Endothelial cell of umbilical vein (primary cell): ENCODE measurements at regions of chr1 and their contacts with region 1.

Region 1: GRCh38 chr1:184222652-184223052 is 164.2 kb upstream of the C1orf21 start:
- DNase-seq: peak; percentile 57
- H3K4me3 ChIP-seq: no peak overlapping the region
- H3K27ac ChIP-seq: no peak overlapping the region
- H3K4me1 ChIP-seq: no peaks in the 10 kb centered on the region
- H3K27me3 ChIP-seq: peaks cover 6 to 8% of the 10 kb centered on the region in 2 experiments
- CTCF ChIP-seq: peak; percentile 87 to 90
- POLR2A ChIP-seq: no peak

Region 2: GRCh38 chr1:183655562-183656075 is 567.0 kb before region 1 on chr1:
- CTCF ChIA-PET with region 1: interaction called, 11 read pairs
- POLR2A ChIA-PET with region 1: no interaction called
- dilution Hi-C with region 1: no loop called
- intact Hi-C with region 1: loop called (anchors 2 kb)
- DNase-seq: peak; percentile 81
- H3K4me3 ChIP-seq: no peak overlapping the region
- H3K27ac ChIP-seq: no peak overlapping the region
- H3K4me1 ChIP-seq: peaks cover 27% of the 10 kb centered on the region
- H3K27me3 ChIP-seq: no peaks in the 10 kb centered on the region
- CTCF ChIP-seq: peak; percentile 73 to 81
- POLR2A ChIP-seq: no peak

Region 3: DNA sequence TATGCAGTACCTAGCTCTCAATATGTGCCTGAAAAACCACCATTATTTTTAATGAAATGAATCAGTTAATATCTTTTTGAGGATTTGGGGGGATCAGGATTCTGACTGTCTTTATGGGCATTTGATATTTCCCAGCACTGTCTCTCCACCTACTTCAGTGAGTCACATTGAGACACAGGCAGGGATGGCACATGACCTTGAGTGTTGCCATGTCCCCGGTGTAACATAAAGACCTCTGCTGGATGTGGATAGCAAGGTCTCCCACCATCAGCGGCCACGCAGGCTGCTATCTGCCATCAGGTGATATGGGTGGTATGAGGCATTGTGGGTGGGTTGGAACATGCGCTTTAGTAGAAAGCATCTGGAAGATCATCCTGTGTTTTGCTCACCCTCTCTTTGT is 314.6 kb before region 1 on chr1:
- CTCF ChIA-PET with region 1: no interaction called
- POLR2A ChIA-PET with region 1: no interaction called
- dilution Hi-C with region 1: no loop called
- intact Hi-C with region 1: no loop called
- DNase-seq: no peak
- H3K4me3 ChIP-seq: no peak overlapping the region
- H3K27ac ChIP-seq: no peak overlapping the region
- H3K4me1 ChIP-seq: no peaks in the 10 kb centered on the region
- H3K27me3 ChIP-seq: no peaks in the 10 kb centered on the region
- CTCF ChIP-seq: no peak
- POLR2A ChIP-seq: no peak

Region 4: DNA sequence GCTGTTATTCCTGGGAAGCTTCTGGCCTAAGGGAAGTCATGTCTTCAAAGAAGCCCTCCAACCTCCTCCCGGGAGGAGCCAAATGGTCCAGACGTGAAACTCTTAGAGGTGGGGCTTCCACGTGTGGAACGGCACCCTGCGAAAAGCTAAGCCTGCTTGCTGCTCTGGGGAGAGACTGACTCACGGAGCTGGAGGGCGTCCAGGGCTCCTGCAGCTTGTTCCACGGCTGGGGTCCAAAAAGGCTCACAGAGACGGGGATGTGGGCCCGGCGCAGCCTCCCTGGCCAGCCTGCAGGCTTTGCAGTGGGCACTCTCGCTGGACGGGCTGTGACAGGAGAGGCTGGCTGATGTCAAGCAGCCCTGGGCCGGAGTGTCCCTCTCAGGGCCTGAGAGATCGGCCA is 290.2 kb before region 1 on chr1:
- CTCF ChIA-PET with region 1: no interaction called
- POLR2A ChIA-PET with region 1: no interaction called
- dilution Hi-C with region 1: no loop called
- intact Hi-C with region 1: loop called (anchors 5 kb)
- DNase-seq: peak; percentile 12
- H3K4me3 ChIP-seq: no peak overlapping the region
- H3K27ac ChIP-seq: no peak overlapping the region
- H3K4me1 ChIP-seq: no peaks in the 10 kb centered on the region
- H3K27me3 ChIP-seq: no peaks in the 10 kb centered on the region
- CTCF ChIP-seq: no peak
- POLR2A ChIP-seq: no peak

Region 5: DNA sequence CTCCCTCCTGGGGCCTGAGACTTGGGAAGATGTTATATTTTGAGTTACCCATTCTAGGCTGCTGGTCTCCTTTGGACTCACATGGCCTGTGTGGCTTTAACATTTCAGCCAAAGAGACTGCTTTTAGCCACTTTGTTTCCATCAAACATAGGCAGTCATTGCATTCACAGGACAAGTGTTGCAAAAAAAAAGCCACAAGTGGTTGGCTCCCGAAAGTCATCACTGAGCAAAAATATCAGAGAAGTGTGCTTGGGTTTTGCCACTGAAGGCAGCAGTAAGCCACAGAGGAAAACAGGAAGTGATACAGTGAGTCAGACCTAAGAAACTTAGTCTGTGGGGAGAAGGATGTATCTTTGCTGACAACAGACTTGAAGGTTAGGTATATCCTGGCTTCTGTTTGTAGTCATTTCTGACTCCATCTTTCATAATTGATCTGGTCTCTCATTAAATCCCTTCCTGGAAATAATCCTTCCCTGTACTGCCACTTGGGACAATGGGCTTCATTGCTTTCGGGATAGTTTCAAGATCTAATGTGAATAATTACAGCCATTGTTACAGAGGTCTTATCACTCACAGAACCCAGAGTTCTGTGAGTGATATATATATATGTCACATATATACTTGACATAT is 266.0 kb before region 1 on chr1:
- CTCF ChIA-PET with region 1: no interaction called
- POLR2A ChIA-PET with region 1: no interaction called
- dilution Hi-C with region 1: no loop called
- intact Hi-C with region 1: loop called (anchors 2 kb)
- DNase-seq: peak; percentile 79
- H3K4me3 ChIP-seq: no peak overlapping the region
- H3K27ac ChIP-seq: no peak overlapping the region
- H3K4me1 ChIP-seq: peaks cover 9% of the 10 kb centered on the region
- H3K27me3 ChIP-seq: peaks cover 5% of the 10 kb centered on the region in 2 experiments
- CTCF ChIP-seq: peak in 1 of 2 donors; percentile 13
- POLR2A ChIP-seq: no peak

Region 6: GRCh38 chr1:184152434-184152898 is 70.2 kb before region 1 on chr1:
- CTCF ChIA-PET with region 1: interaction called, 8 read pairs
- POLR2A ChIA-PET with region 1: no interaction called
- dilution Hi-C with region 1: no loop called
- intact Hi-C with region 1: loop called (anchors 1 kb)
- DNase-seq: peak; percentile 93
- H3K4me3 ChIP-seq: peak overlapping the region; percentile 40 to 81 (median 74)
- H3K27ac ChIP-seq: peak overlapping the region; percentile 79
- H3K4me1 ChIP-seq: peaks cover 29% of the 10 kb centered on the region
- H3K27me3 ChIP-seq: peaks cover 0 to 3% of the 10 kb centered on the region in 2 experiments
- CTCF ChIP-seq: no peak
- POLR2A ChIP-seq: no peak

Region 7: DNA sequence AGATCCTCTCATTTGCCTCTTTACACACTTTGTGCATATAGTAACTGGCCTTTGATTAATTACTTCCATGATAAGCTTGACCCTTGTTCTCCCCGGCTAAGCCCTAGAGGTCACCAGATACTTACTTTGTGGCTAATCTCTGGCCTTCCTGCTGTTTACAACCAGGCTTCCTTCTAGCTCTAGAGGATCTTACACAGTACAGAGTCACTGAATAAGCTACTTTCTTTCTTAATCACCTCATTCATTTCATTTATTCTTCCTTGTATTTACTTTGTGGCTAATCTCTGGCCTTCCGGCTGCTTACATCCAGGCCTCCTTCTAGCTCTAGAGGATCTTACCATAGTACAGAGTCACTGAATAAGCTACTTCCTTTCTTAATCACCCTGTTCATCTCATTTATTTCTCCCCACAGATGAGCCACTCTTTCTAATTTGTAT is 19.9 kb after region 1 on chr1:
- CTCF ChIA-PET with region 1: interaction called, 14 read pairs
- POLR2A ChIA-PET with region 1: no interaction called
- dilution Hi-C with region 1: no loop called
- intact Hi-C with region 1: no loop called
- DNase-seq: peak; percentile 69
- H3K4me3 ChIP-seq: no peak overlapping the region
- H3K27ac ChIP-seq: no peak overlapping the region
- H3K4me1 ChIP-seq: peaks cover 7% of the 10 kb centered on the region
- H3K27me3 ChIP-seq: peaks cover 19 to 48% of the 10 kb centered on the region in 2 experiments
- CTCF ChIP-seq: no peak
- POLR2A ChIP-seq: no peak

Region 8: GRCh38 chr1:184563308-184563707 is 340.7 kb after region 1 on chr1:
- CTCF ChIA-PET with region 1: interaction called, 28 read pairs
- POLR2A ChIA-PET with region 1: no interaction called
- dilution Hi-C with region 1: no loop called
- intact Hi-C with region 1: loop called (anchors 1 kb)
- DNase-seq: peak; percentile 62
- H3K4me3 ChIP-seq: no peak overlapping the region
- H3K27ac ChIP-seq: no peak overlapping the region
- H3K4me1 ChIP-seq: no peaks in the 10 kb centered on the region
- H3K27me3 ChIP-seq: peaks cover 0 to 2% of the 10 kb centered on the region in 2 experiments
- CTCF ChIP-seq: peak; percentile 36
- POLR2A ChIP-seq: no peak